ENCODE measurements at regions of chr9 and their contacts with region 1.

Region 1: GRCh38 chr9:97710356-97711222 is 13.4 kb upstream of the XPA start:
- DNase-seq: peak; percentile 68
- H3K4me3 ChIP-seq: no peak overlapping the region
- H3K27ac ChIP-seq: no peak overlapping the region
- H3K4me1 ChIP-seq: no peaks in the 10 kb centered on the region
- H3K27me3 ChIP-seq: peaks cover 33% of the 10 kb centered on the region
- CTCF ChIP-seq: peak; percentile 81

Region 2: GRCh38 chr9:97803167-97804058 is 92.8 kb after region 1 on chr9:
- CTCF ChIA-PET with region 1: no interaction called
- POLR2A ChIA-PET with region 1: no interaction called
- intact Hi-C with region 1: no loop called
- DNase-seq: peak; percentile 76
- H3K4me3 ChIP-seq: peak overlapping the region; percentile 54
- H3K27ac ChIP-seq: no peak overlapping the region
- H3K4me1 ChIP-seq: no peaks in the 10 kb centered on the region
- H3K27me3 ChIP-seq: peaks cover 21% of the 10 kb centered on the region
- CTCF ChIP-seq: no peak

Region 3: DNA sequence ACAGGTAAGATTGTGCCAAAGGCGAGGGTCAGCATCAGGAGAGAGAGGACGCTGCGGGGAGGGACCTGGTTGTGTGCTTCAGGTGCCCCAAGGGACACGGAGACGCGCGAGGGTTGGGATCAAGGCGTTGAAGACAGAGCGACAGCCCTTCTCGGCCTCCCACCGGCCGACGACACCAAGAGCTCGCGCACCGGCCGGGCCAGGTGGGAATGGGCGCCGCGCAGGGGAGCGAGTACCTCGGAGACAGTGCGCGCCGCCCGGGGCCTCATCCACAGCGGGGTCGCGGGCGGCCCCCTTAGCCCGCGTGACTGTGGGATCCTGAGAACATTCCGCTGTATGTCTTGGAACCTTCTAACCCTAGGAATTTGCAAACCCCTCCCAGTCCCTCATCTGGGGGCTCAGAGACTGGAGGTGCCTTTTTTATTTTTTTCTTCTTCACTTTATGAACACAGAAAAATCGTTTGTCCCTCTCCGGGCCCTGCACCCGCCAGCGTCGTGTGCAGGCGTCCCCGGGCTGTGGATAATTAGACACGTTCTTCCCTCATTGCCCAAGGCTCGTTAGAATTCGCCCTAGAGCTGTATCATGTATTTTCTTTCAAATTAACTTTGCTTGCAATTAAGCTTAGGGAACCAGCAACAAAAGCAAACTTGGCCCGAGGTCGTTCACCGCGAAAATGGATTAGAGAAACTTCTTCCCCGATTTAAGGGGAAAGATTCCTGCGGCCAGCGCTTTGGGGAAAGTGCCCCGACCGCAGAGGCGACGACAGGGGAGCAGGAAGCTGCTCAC is 147.2 kb after region 1 on chr9:
- CTCF ChIA-PET with region 1: no interaction called
- POLR2A ChIA-PET with region 1: no interaction called
- intact Hi-C with region 1: no loop called
- DNase-seq: no peak
- H3K4me3 ChIP-seq: no peak overlapping the region
- H3K27ac ChIP-seq: no peak overlapping the region
- H3K4me1 ChIP-seq: peaks cover 9% of the 10 kb centered on the region
- H3K27me3 ChIP-seq: peaks cover 92% of the 10 kb centered on the region
- CTCF ChIP-seq: no peak

Region 4: GRCh38 chr9:97900738-97901565 is 190.4 kb after region 1 on chr9:
- CTCF ChIA-PET with region 1: interaction called, 3 read pairs
- POLR2A ChIA-PET with region 1: no interaction called
- intact Hi-C with region 1: loop called (anchors 1 kb)
- DNase-seq: peak; percentile 59
- H3K4me3 ChIP-seq: no peak overlapping the region
- H3K27ac ChIP-seq: no peak overlapping the region
- H3K4me1 ChIP-seq: no peaks in the 10 kb centered on the region
- H3K27me3 ChIP-seq: no peaks in the 10 kb centered on the region
- CTCF ChIP-seq: peak; percentile 81

Region 5: GRCh38 chr9:98263482-98264357 is 553.1 kb after region 1 on chr9:
- CTCF ChIA-PET with region 1: no interaction called
- POLR2A ChIA-PET with region 1: no interaction called
- intact Hi-C with region 1: loop called (anchors 5 kb)
- DNase-seq: peak; percentile 85
- H3K4me3 ChIP-seq: no peak overlapping the region
- H3K27ac ChIP-seq: no peak overlapping the region
- H3K4me1 ChIP-seq: no peaks in the 10 kb centered on the region
- H3K27me3 ChIP-seq: no peaks in the 10 kb centered on the region
- CTCF ChIP-seq: peak; percentile 96

Measured in A673 (cell line).